Activated CD4-positive, alpha-beta T cell treated with anti-CD3 and anti-CD28 coated beads for 36 hours (primary cell): ENCODE measurements at regions of chr14 and their contacts with region 1.

Region 1: DNA sequence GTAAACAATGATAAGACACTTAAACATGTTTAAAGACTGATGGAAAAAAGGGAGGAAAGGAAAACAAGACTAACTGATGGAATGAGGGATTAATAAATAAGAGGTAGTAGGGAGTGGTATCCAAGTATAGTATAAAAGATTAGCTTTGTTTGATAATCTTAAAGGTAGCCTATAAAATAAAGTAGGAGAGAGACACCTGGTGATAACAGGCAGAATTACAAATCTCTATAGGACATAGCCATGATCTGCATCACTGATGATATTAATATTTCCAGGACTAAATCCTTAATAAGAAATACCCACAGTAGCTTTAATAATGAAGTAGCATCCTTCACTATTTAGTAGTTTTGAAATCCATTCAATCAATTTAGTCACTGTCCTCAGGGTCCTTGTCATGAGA is 30.4 kb downstream of the DLGAP5 start:
- DNase-seq: no peak
- ATAC-seq: no peak
- H3K4me3 Mint-ChIP-seq: no peak overlapping the region
- H3K27ac Mint-ChIP-seq: no peak overlapping the region
- H3K4me1 Mint-ChIP-seq: peaks cover 8% of the 10 kb centered on the region
- H3K27me3 Mint-ChIP-seq: no peaks in the 10 kb centered on the region

Region 2: DNA sequence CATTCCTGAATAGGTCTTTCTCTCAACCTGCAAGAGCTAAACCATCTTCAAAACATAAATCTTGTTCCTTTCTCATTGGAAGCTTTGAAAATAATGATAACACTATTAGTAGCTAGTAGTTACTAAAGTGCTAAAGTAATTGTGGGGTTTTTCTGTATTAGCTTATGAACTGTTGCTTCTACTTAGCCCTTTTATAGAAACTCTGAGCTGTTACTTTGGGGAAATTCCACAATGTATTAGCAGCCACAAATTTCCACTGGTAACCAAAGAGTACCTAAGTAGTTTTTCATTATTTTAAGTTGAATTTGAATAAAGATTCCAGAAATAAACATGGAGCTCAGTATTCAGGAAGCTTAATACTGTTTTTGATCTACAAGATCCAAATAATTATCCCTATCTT is 115.9 kb before region 1 on chr14:
- CTCF ChIA-PET with region 1: no interaction called
- POLR2A ChIA-PET with region 1: no interaction called
- intact Hi-C with region 1: no loop called
- DNase-seq: no peak
- ATAC-seq: no peak
- H3K4me3 Mint-ChIP-seq: no peak overlapping the region
- H3K27ac Mint-ChIP-seq: peak overlapping the region; percentile 10
- H3K4me1 Mint-ChIP-seq: peaks cover 9% of the 10 kb centered on the region
- H3K27me3 Mint-ChIP-seq: no peaks in the 10 kb centered on the region

Region 3: GRCh38 chr14:55094321-55095157 is 66.5 kb before region 1 on chr14:
- CTCF ChIA-PET with region 1: interaction called, 8 read pairs
- POLR2A ChIA-PET with region 1: no interaction called
- intact Hi-C with region 1: loop called (anchors 1 kb)
- DNase-seq: no peak
- ATAC-seq: no peak
- H3K4me3 Mint-ChIP-seq: no peak overlapping the region
- H3K27ac Mint-ChIP-seq: no peak overlapping the region
- H3K4me1 Mint-ChIP-seq: peaks cover 20% of the 10 kb centered on the region
- H3K27me3 Mint-ChIP-seq: no peaks in the 10 kb centered on the region

Region 4: GRCh38 chr14:55416866-55417265 is 255.9 kb after region 1 on chr14:
- CTCF ChIA-PET with region 1: no interaction called
- POLR2A ChIA-PET with region 1: no interaction called
- intact Hi-C with region 1: no loop called
- DNase-seq: peak; percentile 66
- ATAC-seq: peak; percentile 67
- H3K4me3 Mint-ChIP-seq: no peak overlapping the region
- H3K27ac Mint-ChIP-seq: no peak overlapping the region
- H3K4me1 Mint-ChIP-seq: peaks cover 7% of the 10 kb centered on the region
- H3K27me3 Mint-ChIP-seq: no peaks in the 10 kb centered on the region